ENCODE measurements at regions of chr3 and their contacts with region 1.

Region 1: DNA sequence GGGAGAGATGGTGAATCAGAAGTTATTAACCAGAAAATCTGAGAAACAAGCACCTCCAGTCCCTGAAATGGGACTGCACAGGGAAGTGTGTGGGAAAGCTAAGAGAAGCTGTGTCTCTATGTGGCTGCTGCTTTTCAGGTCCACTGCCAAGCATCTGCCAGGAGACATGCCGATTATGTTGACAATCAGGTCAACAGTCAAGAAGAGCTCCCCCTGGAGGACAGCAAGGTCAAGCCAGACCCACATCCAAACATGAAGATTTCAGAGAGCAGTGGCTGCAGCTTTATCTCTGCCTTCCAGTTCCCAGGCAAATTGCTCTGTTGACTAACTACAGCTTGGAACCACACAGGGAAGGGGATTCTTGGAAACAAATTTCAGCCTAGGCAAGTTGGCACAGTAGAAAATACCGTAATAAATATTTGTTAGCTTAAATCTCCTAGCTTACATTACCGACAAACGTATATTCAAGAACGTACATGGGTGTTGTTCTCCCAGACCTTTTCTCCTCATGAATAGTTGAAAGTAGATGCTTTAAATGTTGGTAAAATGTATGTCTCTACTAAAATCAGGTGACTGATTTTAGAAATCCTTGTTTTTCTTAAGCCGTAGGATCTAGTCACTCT is 394.5 kb upstream of the RARB start:
- DNase-seq: peak; percentile 31 to 69
- H3K4me3 ChIP-seq: no peak overlapping the region
- H3K27ac ChIP-seq: no peak overlapping the region
- H3K4me1 ChIP-seq: no peaks in the 10 kb centered on the region
- H3K27me3 ChIP-seq: peaks cover 0 to 1% (median 0%) of the 10 kb centered on the region in 4 experiments; a peak in 1 of 7 replicates
- CTCF ChIP-seq: peak; percentile 72 to 93 (median 74)
- EP300 ChIP-seq: no peak
- POLR2A ChIP-seq: no peak
- RAD21 ChIP-seq: peak; percentile 67 to 75

Region 2: GRCh38 chr3:24915639-24916038 is 117.9 kb before region 1 on chr3:
- CTCF ChIA-PET with region 1: interaction called, 10 read pairs
- POLR2A ChIA-PET with region 1: no interaction called
- DNase-seq: no peak
- H3K4me3 ChIP-seq: no peak overlapping the region
- H3K27ac ChIP-seq: no peak overlapping the region
- H3K4me1 ChIP-seq: no peaks in the 10 kb centered on the region
- H3K27me3 ChIP-seq: no peaks in the 10 kb centered on the region
- CTCF ChIP-seq: no peak
- EP300 ChIP-seq: no peak
- POLR2A ChIP-seq: no peak
- RAD21 ChIP-seq: no peak

Region 3: DNA sequence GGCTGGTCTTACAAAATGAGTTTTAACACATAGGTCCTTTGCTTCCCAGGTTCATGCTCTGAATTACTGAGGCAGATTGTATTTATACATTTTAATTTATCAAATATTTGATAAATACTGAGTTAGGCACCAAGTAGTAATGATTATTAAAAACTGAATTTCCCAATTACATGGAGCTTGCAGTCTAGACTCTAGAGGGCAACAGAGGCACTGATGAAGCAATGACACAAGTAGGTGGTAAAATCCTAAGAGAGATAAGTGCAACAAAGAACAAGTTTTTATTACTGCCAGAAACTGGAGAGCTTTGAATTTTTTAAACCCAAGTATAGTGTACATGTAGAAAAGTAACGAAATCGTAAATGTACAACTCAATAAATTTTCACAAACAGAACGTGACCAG is 11.7 kb before region 1 on chr3:
- CTCF ChIA-PET with region 1: interaction called, 49 read pairs
- POLR2A ChIA-PET with region 1: no interaction called
- DNase-seq: no peak
- H3K4me3 ChIP-seq: no peak overlapping the region
- H3K27ac ChIP-seq: no peak overlapping the region
- H3K4me1 ChIP-seq: no peaks in the 10 kb centered on the region
- H3K27me3 ChIP-seq: no peaks in the 10 kb centered on the region
- CTCF ChIP-seq: peak in 2 of 3 experiments; percentile 35 to 50; a peak in 2 of 4 replicates
- EP300 ChIP-seq: no peak
- POLR2A ChIP-seq: no peak
- RAD21 ChIP-seq: peak; percentile 60 to 68

Region 4: GRCh38 chr3:25044762-25045710 is 11.5 kb after region 1 on chr3:
- CTCF ChIA-PET with region 1: interaction called, 34 read pairs
- POLR2A ChIA-PET with region 1: no interaction called
- DNase-seq: no peak
- H3K4me3 ChIP-seq: no peak overlapping the region
- H3K27ac ChIP-seq: no peak overlapping the region
- H3K4me1 ChIP-seq: no peaks in the 10 kb centered on the region
- H3K27me3 ChIP-seq: no peaks in the 10 kb centered on the region
- CTCF ChIP-seq: no peak
- EP300 ChIP-seq: no peak
- POLR2A ChIP-seq: no peak
- RAD21 ChIP-seq: no peak

Region 5: GRCh38 chr3:25094932-25095685 is 61.6 kb after region 1 on chr3:
- CTCF ChIA-PET with region 1: no interaction called
- POLR2A ChIA-PET with region 1: no interaction called
- DNase-seq: no peak
- H3K4me3 ChIP-seq: no peak overlapping the region
- H3K27ac ChIP-seq: no peak overlapping the region
- H3K4me1 ChIP-seq: no peaks in the 10 kb centered on the region
- H3K27me3 ChIP-seq: no peaks in the 10 kb centered on the region
- CTCF ChIP-seq: no peak
- EP300 ChIP-seq: no peak
- POLR2A ChIP-seq: no peak
- RAD21 ChIP-seq: 0 out of 4 replicates have a peak, but pooled peaks of 1 of the 2 experiments have one; percentile 6

Region 6: DNA sequence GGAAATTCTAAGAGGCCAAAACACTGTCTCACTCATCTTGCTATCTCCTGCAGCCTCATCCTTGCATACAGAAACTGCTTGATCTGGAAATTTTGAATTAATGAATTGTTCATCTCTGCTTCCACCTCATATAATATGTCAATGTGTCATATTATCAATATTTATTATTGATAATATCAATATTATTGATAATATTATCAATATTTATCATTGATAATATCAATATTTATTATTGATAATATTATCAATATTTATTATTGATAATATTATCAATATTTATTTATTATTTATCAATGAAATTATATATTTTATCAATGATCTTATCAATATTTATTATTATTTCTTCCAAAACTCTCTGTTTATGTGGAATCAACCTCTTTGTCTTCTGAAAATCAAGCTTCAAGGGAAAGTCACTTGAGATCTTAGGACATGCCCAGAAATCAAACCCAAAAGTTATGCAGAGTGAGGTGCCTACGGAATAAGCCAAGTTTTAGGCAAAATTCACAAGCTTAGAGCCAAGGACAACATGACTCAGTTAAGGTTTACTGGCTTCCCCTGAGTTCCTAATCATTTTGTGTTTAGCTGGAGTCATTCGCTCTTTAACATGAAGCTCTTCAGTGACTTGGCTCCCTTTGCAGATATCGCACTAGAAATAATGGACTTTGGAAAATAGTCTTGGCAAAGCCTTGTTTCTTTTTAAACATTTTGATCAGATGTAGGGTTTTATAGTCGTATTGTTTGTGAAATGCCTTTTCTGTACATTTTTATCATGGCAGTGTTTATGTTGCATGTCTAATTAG is 97.4 kb after region 1 on chr3:
- CTCF ChIA-PET with region 1: no interaction called
- POLR2A ChIA-PET with region 1: no interaction called
- DNase-seq: no peak
- H3K4me3 ChIP-seq: no peak overlapping the region
- H3K27ac ChIP-seq: no peak overlapping the region
- H3K4me1 ChIP-seq: no peaks in the 10 kb centered on the region; a peak in 1 of 7 replicates
- H3K27me3 ChIP-seq: no peaks in the 10 kb centered on the region
- CTCF ChIP-seq: no peak
- EP300 ChIP-seq: no peak
- POLR2A ChIP-seq: no peak
- RAD21 ChIP-seq: no peak

Region 7: GRCh38 chr3:25235031-25235430 is 201.5 kb after region 1 on chr3:
- CTCF ChIA-PET with region 1: no interaction called
- POLR2A ChIA-PET with region 1: no interaction called
- DNase-seq: no peak
- H3K4me3 ChIP-seq: no peak overlapping the region
- H3K27ac ChIP-seq: no peak overlapping the region
- H3K4me1 ChIP-seq: no peaks in the 10 kb centered on the region
- H3K27me3 ChIP-seq: no peaks in the 10 kb centered on the region
- CTCF ChIP-seq: no peak
- EP300 ChIP-seq: no peak
- POLR2A ChIP-seq: no peak
- RAD21 ChIP-seq: no peak

Measured in H1 (cell line).